Panc1 (cell line): ENCODE measurements at regions of chr22 and their contacts with region 1.

Region 1: DNA sequence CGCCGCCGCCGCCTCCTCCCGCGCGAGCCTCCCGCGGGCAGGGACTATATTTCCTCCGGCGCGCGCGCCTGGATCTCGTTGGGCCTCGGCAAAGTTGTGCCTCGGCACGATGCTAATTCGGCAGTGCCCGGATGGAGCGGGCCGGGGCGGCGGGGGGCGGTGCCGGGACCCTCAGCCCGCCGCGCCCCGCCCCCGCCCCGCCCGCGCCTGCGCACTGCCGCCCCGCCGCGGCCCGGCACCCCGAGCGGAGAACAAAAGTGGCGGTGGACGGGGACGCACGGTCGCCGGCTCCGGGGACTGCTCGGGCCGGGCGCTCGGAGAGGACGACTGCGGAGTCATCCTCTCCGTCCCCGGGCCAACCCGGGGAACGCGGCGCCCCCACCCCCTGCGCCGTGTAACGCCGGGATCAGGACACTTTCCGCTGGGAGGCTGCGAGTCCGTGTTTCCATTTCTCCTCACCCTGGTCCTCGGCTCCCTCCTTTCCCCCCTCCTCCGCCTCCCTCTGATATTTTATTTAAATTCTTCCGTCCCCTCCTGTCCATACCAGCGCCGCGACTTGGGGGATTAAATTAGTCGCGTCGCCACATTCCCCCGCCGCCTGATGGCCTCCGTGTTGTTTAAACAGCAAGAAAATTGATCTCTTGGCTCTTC is at the start of gene PHF21B:
- DNase-seq: no peak
- ATAC-seq: peak; percentile 79
- H3K4me3 ChIP-seq: peak within 1 kb of the TSS; percentile 63 to 72
- H3K27ac ChIP-seq: peak within 1 kb of the TSS; percentile 70
- H3K4me1 ChIP-seq: 0 out of 2 replicates have a peak, but pooled peaks cover 5% of the 10 kb centered on the region
- H3K27me3 ChIP-seq: no peaks in the 10 kb centered on the region
- CTCF ChIP-seq: no peak
- total RNA-seq, gene PHF21B: 4.5 TPM

Region 2: GRCh38 chr22:45033136-45033535 is 23.1 kb after region 1 on chr22:
- CTCF ChIA-PET with region 1: no interaction called
- POLR2A ChIA-PET with region 1: no interaction called
- in situ Hi-C with region 1: no loop called
- intact Hi-C with region 1: no loop called
- DNase-seq: no peak
- ATAC-seq: no peak
- H3K4me3 ChIP-seq: no peak overlapping the region
- H3K27ac ChIP-seq: no peak overlapping the region
- H3K4me1 ChIP-seq: no peaks in the 10 kb centered on the region
- H3K27me3 ChIP-seq: no peaks in the 10 kb centered on the region; the same call in 1 of the 2 replicates
- CTCF ChIP-seq: no peak

Region 3: GRCh38 chr22:45045208-45045607 is 35.2 kb after region 1 on chr22:
- CTCF ChIA-PET with region 1: interaction called, 10 read pairs
- POLR2A ChIA-PET with region 1: no interaction called
- in situ Hi-C with region 1: no loop called
- intact Hi-C with region 1: no loop called
- DNase-seq: no peak
- ATAC-seq: no peak
- H3K4me3 ChIP-seq: no peak overlapping the region
- H3K27ac ChIP-seq: no peak overlapping the region
- H3K4me1 ChIP-seq: no peaks in the 10 kb centered on the region
- H3K27me3 ChIP-seq: peaks cover 5% of the 10 kb centered on the region
- CTCF ChIP-seq: no peak